ENCODE measurements at regions of chr22 and their contacts with region 1.

Region 1: DNA sequence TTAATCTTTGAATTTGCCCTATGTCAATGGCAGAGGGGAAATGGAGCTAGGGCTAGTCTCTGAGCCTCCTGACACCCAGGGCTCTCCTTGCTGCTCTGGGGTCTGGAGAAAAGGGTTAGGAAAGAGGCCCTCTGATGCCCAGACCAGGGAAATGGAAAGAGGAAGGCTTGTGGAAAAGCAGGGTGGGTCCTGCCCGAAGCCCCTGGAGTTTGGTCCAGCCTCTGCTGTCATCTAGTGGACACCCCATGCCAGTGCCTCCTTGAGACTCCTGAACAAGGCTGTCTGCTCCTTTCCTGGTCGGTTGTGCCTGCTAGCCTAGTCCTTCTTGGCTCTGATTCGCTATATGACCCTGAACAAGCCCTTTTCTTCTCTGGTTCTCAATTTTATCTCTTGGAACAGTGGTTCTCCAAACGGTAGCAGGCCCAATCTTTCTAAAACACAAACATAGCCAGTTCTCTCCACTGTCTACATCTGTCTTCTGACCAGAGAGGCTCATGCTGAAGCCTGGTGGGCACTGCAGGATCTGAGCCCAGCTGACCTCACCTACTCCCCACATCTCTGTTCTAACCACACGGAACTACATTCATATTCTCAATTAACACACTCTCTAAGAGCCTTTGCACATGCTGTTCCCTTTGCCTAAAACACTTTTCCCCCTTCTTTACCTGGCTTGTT is 8.8 kb upstream of the PLA2G3 start:
- H3K4me3 ChIP-seq: no peak overlapping the region
- H3K27ac ChIP-seq: no peak overlapping the region
- H3K4me1 ChIP-seq: no peaks in the 10 kb centered on the region
- CTCF ChIP-seq: peak; percentile 94

Region 2: GRCh38 chr22:30763815-30764686 is 385.0 kb before region 1 on chr22:
- CTCF ChIA-PET with region 1: interaction called, 28 read pairs
- POLR2A ChIA-PET with region 1: no interaction called
- H3K4me3 ChIP-seq: no peak overlapping the region
- H3K27ac ChIP-seq: no peak overlapping the region
- H3K4me1 ChIP-seq: no peaks in the 10 kb centered on the region
- CTCF ChIP-seq: no peak

Region 3: GRCh38 chr22:30866811-30867271 is 282.2 kb before region 1 on chr22:
- CTCF ChIA-PET with region 1: no interaction called
- POLR2A ChIA-PET with region 1: no interaction called
- H3K4me3 ChIP-seq: no peak overlapping the region
- H3K27ac ChIP-seq: no peak overlapping the region
- H3K4me1 ChIP-seq: no peaks in the 10 kb centered on the region
- CTCF ChIP-seq: 0 out of 2 replicates have a peak, but pooled peaks have one; percentile 16

Region 4: GRCh38 chr22:31089160-31090100 is 59.7 kb before region 1 on chr22:
- CTCF ChIA-PET with region 1: interaction called, 13 read pairs
- POLR2A ChIA-PET with region 1: no interaction called
- H3K4me3 ChIP-seq: no peak overlapping the region
- H3K27ac ChIP-seq: no peak overlapping the region
- H3K4me1 ChIP-seq: no peaks in the 10 kb centered on the region
- CTCF ChIP-seq: peak; percentile 81

Region 5: DNA sequence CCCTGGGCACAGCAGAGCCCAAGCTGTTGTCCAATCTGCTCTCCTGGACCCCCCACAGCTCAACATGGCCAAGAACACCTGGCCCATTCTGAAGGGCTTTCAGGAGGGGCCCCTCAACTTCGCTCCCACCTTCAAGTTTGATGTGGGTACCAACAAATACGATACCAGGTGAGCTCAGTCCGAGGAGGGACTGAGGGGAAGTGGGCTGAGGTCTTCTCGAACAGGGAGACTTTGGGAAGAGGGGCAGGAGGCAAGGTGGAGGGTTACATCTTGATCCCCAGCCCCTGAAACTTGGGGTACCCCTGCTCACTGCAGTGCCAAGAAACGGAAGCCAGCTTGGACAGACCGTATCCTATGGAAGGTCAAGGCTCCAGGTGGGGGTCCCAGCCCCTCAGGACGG is 20.9 kb before region 1 on chr22:
- CTCF ChIA-PET with region 1: interaction called, 11 read pairs
- POLR2A ChIA-PET with region 1: no interaction called
- H3K4me3 ChIP-seq: no peak overlapping the region
- H3K27ac ChIP-seq: no peak overlapping the region
- H3K4me1 ChIP-seq: peaks cover 7% of the 10 kb centered on the region
- CTCF ChIP-seq: no peak

Region 6: GRCh38 chr22:31136711-31137110 is 12.4 kb before region 1 on chr22:
- CTCF ChIA-PET with region 1: interaction called, 15 read pairs
- POLR2A ChIA-PET with region 1: no interaction called
- H3K4me3 ChIP-seq: no peak overlapping the region
- H3K27ac ChIP-seq: no peak overlapping the region
- H3K4me1 ChIP-seq: peaks cover 4% of the 10 kb centered on the region
- CTCF ChIP-seq: no peak